ENCODE measurements at regions of chr17 and their contacts with region 1.

Region 1: DNA sequence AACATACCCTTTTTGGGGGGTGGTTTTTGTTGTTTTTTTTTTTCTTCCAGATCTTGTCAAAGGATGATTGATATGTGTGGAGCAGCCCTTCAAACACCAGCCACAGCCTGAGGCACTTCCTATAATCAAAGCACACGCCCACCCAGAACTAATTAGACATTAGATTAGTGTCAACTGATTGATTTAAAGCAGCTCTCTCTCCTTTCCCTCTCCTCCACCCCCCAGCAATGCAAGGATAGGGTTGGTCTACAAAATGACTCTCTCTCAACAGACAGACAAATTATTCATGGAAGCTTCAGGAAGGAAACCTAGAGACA is 250.3 kb upstream of the SOX9 start:
- DNase-seq: no peak
- ATAC-seq: no peak
- H3K4me3 ChIP-seq: no peak overlapping the region
- H3K27ac ChIP-seq: no peak overlapping the region
- H3K4me1 ChIP-seq: no peaks in the 10 kb centered on the region
- H3K27me3 ChIP-seq: no peaks in the 10 kb centered on the region

Region 2: DNA sequence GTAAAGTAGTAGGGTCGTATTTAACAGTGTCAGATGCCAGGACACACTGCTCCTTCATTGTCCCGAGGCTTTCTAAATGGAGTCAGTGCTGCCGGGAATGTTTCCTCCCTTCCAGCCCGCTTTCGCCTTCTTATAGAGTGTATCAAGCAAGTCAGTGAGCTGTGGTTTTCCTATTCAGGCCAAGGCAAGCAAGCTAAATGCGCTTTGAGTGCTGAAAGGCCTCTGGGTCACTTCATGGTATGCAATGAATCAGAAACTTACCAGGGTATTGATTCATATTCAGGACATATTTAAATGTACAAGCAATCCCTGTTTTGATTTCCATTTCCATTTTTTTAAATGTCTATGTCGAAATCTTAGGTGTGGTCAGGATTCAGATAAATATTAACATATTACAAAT is 77.5 kb before region 1 on chr17:
- intact Hi-C with region 1: loop called in 1 of 4 experiments (anchors 10 kb)
- DNase-seq: no peak
- ATAC-seq: no peak
- H3K4me3 ChIP-seq: no peak overlapping the region
- H3K27ac ChIP-seq: no peak overlapping the region
- H3K4me1 ChIP-seq: no peaks in the 10 kb centered on the region
- H3K27me3 ChIP-seq: no peaks in the 10 kb centered on the region

Region 3: DNA sequence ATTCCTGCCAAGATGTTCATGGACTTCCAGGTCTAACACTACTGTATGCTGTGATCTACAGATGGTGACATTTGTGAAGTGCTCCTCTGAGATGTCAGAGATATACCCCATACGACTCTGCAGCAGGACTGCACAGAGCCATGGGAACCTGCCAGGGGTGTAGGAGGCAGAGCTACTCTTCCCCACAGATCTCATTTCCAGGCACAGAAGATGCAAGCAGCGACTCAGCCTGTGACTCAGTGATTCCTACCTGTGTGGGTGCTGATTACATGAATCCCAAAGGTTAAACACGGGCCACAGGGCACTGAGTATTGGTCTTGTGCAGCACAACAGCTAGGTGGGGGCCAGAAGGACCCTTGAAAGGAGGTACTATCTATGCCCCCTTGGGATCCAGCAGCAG is 113.3 kb after region 1 on chr17:
- intact Hi-C with region 1: no loop called
- DNase-seq: no peak
- ATAC-seq: no peak
- H3K4me3 ChIP-seq: no peak overlapping the region
- H3K27ac ChIP-seq: no peak overlapping the region
- H3K4me1 ChIP-seq: no peaks in the 10 kb centered on the region
- H3K27me3 ChIP-seq: no peaks in the 10 kb centered on the region

Measured in right cardiac atrium (tissue), 5 donors.